Calu3 (cell line): ENCODE measurements at regions of chr22 and their contacts with region 1.

Region 1: DNA sequence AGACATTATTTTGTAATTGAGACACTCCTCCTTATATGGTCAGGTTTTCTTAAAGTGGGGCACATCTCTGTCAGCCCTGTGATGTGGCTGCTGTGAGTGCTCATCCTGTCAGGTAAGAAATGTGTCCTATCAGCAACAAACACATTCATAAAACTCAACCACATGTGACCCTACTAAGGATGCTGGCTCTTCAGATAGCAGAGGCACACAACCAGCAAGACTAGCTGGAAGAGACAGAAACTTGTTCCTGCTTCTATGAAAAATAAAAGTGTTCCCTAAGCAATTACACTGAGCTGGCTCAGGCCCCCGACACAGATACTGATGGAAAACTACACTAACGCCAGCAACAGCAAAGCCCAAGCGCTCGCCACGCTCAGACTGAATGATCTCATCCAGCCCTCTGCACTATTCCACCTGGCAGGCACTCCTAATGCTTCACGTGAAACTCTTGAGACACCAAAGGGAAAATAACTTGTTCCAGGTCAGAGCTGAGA is 49.8 kb upstream of the CYP2D6 start:
- DNase-seq: no peak
- H3K4me3 Mint-ChIP-seq: no peak overlapping the region
- H3K27ac Mint-ChIP-seq: no peak overlapping the region
- H3K4me1 Mint-ChIP-seq: peaks cover 77% of the 10 kb centered on the region
- H3K27me3 Mint-ChIP-seq: no peaks in the 10 kb centered on the region
- CTCF ChIP-seq: no peak

Region 2: GRCh38 chr22:42111798-42112197 is 68.6 kb before region 1 on chr22:
- CTCF ChIA-PET with region 1: no interaction called
- intact Hi-C with region 1: no loop called
- DNase-seq: no peak
- H3K4me3 Mint-ChIP-seq: no peak overlapping the region
- H3K27ac Mint-ChIP-seq: no peak overlapping the region
- H3K4me1 Mint-ChIP-seq: no peaks in the 10 kb centered on the region
- H3K27me3 Mint-ChIP-seq: no peaks in the 10 kb centered on the region
- CTCF ChIP-seq: no peak

Region 3: DNA sequence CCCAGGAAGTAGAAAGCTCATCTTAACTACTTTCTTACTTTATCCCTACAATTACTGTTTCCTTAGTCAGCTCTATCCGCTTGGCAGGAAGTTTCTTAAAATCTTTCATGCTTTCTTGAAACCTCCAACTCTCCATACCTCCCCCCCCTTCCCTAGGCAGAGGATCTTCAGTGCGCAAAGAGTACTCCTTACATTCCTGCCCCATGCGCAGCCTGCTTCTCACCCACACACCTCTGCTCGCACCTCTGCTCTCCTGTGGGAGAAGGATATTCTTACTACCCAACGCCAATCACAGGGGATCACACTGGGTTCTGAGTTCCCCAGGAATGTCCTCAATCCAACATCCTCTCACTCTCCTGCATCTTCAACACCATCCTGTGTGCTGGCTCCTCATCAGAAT is 77.7 kb after region 1 on chr22:
- CTCF ChIA-PET with region 1: no interaction called
- intact Hi-C with region 1: no loop called
- DNase-seq: no peak
- H3K4me3 Mint-ChIP-seq: no peak overlapping the region
- H3K27ac Mint-ChIP-seq: no peak overlapping the region
- H3K4me1 Mint-ChIP-seq: peaks cover 33% of the 10 kb centered on the region
- H3K27me3 Mint-ChIP-seq: no peaks in the 10 kb centered on the region
- CTCF ChIP-seq: no peak

Region 4: DNA sequence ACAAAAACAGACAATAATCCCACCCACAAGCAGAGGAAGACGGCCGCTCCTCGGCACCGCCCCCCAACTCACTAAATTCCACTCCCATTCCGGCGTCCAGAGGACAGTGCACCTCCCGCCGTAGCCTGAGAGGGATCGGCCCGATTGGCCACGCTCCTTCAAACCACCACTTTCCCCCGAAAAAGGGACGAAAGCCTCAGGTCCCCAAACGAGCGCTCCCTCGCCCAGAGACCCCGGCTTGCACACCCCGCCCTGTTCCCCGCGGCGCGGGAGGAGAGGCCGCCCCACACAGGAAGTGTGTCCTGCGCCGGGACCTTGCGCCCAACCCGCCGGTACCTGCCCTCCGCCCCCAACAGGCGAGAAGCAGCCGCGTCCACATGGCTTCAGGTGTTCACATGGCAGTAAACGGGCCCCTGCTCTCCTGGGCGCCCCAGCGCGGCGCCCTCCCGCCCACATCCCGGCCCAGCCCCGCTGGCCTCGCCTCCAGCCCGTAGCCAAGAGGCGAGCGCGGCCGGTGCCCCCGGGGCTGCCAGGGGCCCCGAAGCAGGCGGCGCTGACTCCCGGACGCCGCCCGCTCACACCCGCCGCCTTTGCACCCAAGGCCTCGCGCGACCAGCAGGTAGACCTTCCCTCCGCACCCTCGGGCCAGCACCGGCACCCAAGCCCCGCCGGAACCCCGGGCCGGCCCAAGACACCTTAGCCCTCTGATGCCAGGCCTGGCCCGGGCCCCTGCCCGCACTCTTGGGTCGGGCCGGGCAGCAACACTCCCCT is 89.2 kb after region 1 on chr22:
- CTCF ChIA-PET with region 1: no interaction called
- intact Hi-C with region 1: loop called (anchors 5 kb)
- DNase-seq: peak; percentile 84
- H3K4me3 Mint-ChIP-seq: peak overlapping the region; percentile 97
- H3K27ac Mint-ChIP-seq: peak overlapping the region; percentile 78
- H3K4me1 Mint-ChIP-seq: peaks cover 14% of the 10 kb centered on the region
- H3K27me3 Mint-ChIP-seq: no peaks in the 10 kb centered on the region
- CTCF ChIP-seq: no peak